Mammary epithelial cell (primary cell): ENCODE measurements at regions of chr9 and their contacts with region 1.

Region 1: DNA sequence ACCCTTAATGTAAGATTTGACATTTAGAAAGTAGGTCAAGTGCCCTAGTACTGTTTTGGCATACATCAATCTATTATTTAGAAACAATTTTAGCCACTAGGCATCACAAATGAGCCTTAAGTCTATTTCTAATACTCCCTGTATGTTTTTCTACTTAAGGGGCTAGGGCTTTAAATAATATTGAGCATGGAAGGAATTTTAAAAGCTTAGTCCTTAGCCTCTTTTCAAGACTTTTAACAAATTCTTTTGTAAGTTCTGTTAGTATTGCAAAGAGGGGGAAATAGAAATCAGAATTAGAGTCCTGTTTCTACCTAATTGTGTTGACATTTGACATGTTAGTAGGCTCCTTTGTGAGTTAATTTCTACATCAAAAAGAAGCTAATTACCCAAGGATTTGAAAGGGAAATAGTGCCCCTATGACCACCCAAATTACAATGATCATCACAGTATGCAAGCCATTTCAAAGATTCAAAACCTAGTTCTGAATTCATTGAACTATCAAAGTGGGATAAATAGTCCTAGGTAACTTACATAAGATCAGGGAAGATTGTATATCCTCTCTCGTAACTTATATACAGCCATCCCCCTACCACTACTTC is 647.8 kb upstream of the ACO1 start:
- DNase-seq: no peak
- H3K4me3 ChIP-seq: no peak overlapping the region
- H3K27ac ChIP-seq: no peak overlapping the region
- H3K4me1 ChIP-seq: peaks cover 8% of the 10 kb centered on the region
- H3K27me3 ChIP-seq: no peaks in the 10 kb centered on the region
- CTCF ChIP-seq: no peak

Region 2: DNA sequence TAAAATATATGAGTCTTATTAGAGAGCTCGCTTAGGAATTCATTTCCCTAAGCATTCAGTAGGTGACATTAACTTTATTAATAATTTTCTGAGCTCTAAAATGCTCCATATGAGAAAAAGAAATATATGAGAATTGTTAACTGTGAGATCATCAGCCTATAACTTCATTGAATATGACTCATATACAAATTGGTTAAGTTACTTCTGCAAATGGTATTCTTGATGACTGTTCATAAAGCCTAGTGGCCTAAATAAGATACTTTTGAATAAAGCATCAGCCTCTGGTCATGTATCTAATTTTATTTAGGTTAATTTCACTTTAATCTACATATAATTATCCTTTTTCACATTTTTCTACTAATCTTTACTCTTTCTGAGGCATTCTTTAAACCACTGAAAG is 62.4 kb before region 1 on chr9:
- CTCF ChIA-PET with region 1: no interaction called
- dilution Hi-C with region 1: loop called (anchors 5 kb)
- in situ Hi-C with region 1: no loop called
- intact Hi-C with region 1: no loop called
- DNase-seq: peak; percentile 46
- H3K4me3 ChIP-seq: no peak overlapping the region
- H3K27ac ChIP-seq: no peak overlapping the region
- H3K4me1 ChIP-seq: no peaks in the 10 kb centered on the region
- H3K27me3 ChIP-seq: no peaks in the 10 kb centered on the region
- CTCF ChIP-seq: peak in 1 of 2 donors; percentile 10